ENCODE measurements at regions of chr3 and their contacts with region 1.

Region 1: GRCh38 chr3:129439817-129440617 is at the starts of genes IFT122 and MBD4:
- DNase-seq: peak; percentile 97 to 100 (median 98)
- ATAC-seq: peak; percentile 82
- H3K4me3 ChIP-seq: peak within 1 kb of the TSS; percentile 87 to 99
- H3K4me3 Mint-ChIP-seq: peak within 1 kb of the TSS; percentile 96
- H3K27ac ChIP-seq: peak within 1 kb of the TSS; percentile 92 to 93
- H3K27ac Mint-ChIP-seq: peak within 1 kb of the TSS; percentile 98
- H3K4me1 ChIP-seq: peaks cover 34% of the 10 kb centered on the region
- H3K4me1 Mint-ChIP-seq: peaks cover 70% of the 10 kb centered on the region
- H3K27me3 ChIP-seq: no peaks in the 10 kb centered on the region
- H3K27me3 Mint-ChIP-seq: no peaks in the 10 kb centered on the region
- CTCF ChIP-seq: no peak
- total RNA-seq, gene IFT122: 14.7 to 16.9 TPM
- total RNA-seq, gene MBD4: 48.5 to 51.8 TPM

Region 2: DNA sequence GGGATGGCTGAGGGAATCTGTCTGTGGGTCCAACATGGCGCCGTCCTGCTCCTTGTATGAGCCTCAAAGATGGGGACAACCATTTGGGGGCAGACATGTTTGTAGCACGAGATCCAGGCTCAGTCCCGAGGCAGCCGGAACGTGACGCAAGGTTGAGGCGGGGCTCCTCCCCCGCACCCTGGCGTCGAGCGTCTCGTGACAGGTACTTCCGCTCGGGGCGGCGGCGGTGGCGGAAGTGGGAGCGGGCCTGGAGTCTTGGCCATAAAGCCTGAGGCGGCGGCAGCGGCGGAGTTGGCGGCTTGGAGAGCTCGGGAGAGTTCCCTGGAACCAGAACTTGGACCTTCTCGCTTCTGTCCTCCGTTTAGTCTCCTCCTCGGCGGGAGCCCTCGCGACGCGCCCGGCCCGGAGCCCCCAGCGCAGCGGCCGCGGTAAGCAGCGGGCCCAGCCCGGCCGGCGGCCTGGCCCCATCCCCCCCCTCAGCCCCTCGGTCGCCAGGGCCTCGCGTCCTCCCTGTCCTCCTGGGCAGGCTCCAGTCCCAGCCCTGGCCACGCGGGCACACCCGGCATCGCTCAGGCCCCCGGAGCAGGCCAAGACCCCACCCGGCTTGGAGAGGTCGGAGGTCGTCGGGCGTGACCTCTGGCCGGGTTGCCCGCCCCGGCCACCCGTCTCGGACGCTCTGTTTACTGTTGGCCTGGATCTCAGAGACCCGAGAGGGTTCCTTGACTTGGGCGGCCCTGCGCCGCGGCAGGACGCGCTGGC is 713.9 kb before region 1 on chr3 and contains the start of gene RAB7A:
- CTCF ChIA-PET with region 1: no interaction called
- POLR2A ChIA-PET with region 1: no interaction called
- intact Hi-C with region 1: loop called in 1 of 2 experiments (anchors 10 kb)
- DNase-seq: peak; percentile 95 to 99 (median 97)
- ATAC-seq: peak; percentile 98
- H3K4me3 ChIP-seq: peak within 1 kb of the TSS; percentile 82 to 83
- H3K4me3 Mint-ChIP-seq: peak within 1 kb of the TSS; percentile 97
- H3K27ac ChIP-seq: peak within 1 kb of the TSS; percentile 92
- H3K27ac Mint-ChIP-seq: peak within 1 kb of the TSS; percentile 95
- H3K4me1 ChIP-seq: peaks cover 41% of the 10 kb centered on the region
- H3K4me1 Mint-ChIP-seq: peaks cover 53% of the 10 kb centered on the region
- H3K27me3 ChIP-seq: no peaks in the 10 kb centered on the region
- H3K27me3 Mint-ChIP-seq: no peaks in the 10 kb centered on the region
- CTCF ChIP-seq: no peak
- total RNA-seq, gene RAB7A: 130 to 134 TPM

Region 3: DNA sequence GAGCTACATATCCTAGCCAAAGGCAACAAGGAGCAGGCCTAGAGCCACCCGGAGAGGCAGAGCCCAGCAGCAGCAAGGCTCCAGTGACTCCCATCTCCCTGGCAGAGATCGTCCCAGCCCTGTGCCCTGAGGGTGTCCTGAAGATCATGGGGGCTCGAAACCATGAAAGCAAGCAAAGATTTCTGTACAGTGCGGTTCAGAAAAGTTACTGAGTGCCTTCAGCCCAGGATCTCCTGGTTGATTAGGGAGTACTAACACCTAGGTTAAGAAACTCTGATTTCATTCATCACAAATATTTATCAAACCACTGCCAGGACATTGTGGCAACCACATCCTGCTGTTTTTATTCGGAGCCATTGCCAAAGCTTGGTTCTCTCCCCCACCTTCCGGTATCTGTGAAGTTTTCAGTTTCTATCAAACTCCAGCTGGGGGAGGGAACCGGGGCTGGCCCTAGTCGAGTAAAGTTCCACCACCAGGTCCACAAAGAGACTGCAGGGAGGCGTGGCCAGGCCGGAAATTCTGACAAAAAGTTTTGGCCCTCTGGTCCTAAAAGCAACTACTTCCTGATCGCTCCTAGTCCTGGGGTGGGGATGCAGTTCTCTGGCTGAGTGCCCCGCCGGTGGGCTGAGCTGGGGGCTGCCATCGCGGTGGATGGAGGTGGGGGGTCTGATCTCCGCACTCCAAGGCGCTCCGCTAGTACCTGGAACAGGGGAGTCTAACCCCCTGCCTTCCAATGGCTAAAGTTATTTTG is 319.6 kb before region 1 on chr3:
- CTCF ChIA-PET with region 1: no interaction called
- POLR2A ChIA-PET with region 1: no interaction called
- intact Hi-C with region 1: loop called in 1 of 2 experiments (anchors 2 kb)
- DNase-seq: peak; percentile 79 to 97 (median 92)
- ATAC-seq: peak; percentile 51
- H3K4me3 ChIP-seq: peak overlapping the region; percentile 85 to 93
- H3K4me3 Mint-ChIP-seq: peak overlapping the region; percentile 94
- H3K27ac ChIP-seq: peak overlapping the region; percentile 74
- H3K27ac Mint-ChIP-seq: peak overlapping the region; percentile 99
- H3K4me1 ChIP-seq: peaks cover 33% of the 10 kb centered on the region
- H3K4me1 Mint-ChIP-seq: peaks cover 59% of the 10 kb centered on the region
- H3K27me3 ChIP-seq: no peaks in the 10 kb centered on the region
- H3K27me3 Mint-ChIP-seq: no peaks in the 10 kb centered on the region
- CTCF ChIP-seq: peak; percentile 26

Region 4: DNA sequence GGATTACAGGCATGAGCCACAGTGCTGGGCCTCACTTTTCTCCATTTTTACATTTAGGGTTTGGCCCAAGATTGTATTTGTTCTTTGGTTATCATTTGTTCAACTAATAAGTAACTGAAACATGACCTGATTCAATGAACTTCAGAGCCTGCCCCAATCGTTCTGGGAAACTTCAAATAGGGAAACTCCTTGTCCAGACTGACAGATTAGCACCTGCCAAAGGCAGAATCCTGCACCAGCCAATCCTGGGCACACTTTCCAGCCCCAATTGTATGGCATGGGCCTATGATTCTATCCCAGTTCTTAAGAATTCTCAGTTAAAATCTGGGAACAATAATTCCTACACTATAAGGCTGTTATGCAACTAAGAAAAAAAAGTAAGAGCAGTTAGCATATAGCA is 300.1 kb before region 1 on chr3:
- CTCF ChIA-PET with region 1: no interaction called
- POLR2A ChIA-PET with region 1: no interaction called
- intact Hi-C with region 1: no loop called
- DNase-seq: no peak
- ATAC-seq: no peak
- H3K4me3 ChIP-seq: no peak overlapping the region
- H3K4me3 Mint-ChIP-seq: no peak overlapping the region
- H3K27ac ChIP-seq: no peak overlapping the region
- H3K27ac Mint-ChIP-seq: no peak overlapping the region
- H3K4me1 ChIP-seq: no peaks in the 10 kb centered on the region
- H3K4me1 Mint-ChIP-seq: no peaks in the 10 kb centered on the region
- H3K27me3 ChIP-seq: no peaks in the 10 kb centered on the region
- H3K27me3 Mint-ChIP-seq: no peaks in the 10 kb centered on the region
- CTCF ChIP-seq: no peak

Region 5: GRCh38 chr3:129399145-129399894 is 40.7 kb before region 1 on chr3:
- CTCF ChIA-PET with region 1: interaction called, 4 read pairs
- POLR2A ChIA-PET with region 1: no interaction called
- intact Hi-C with region 1: loop called (anchors 1 kb)
- DNase-seq: peak; percentile 40 to 96 (median 73)
- ATAC-seq: peak; percentile 83
- H3K4me3 ChIP-seq: peak overlapping the region; percentile 63 to 72
- H3K4me3 Mint-ChIP-seq: peak overlapping the region; percentile 98
- H3K27ac ChIP-seq: peak overlapping the region; percentile 73 to 88
- H3K27ac Mint-ChIP-seq: peak overlapping the region; percentile 99
- H3K4me1 ChIP-seq: peaks cover 12% of the 10 kb centered on the region
- H3K4me1 Mint-ChIP-seq: peaks cover 42% of the 10 kb centered on the region
- H3K27me3 ChIP-seq: no peaks in the 10 kb centered on the region
- H3K27me3 Mint-ChIP-seq: no peaks in the 10 kb centered on the region
- CTCF ChIP-seq: peak; percentile 78

Region 6: DNA sequence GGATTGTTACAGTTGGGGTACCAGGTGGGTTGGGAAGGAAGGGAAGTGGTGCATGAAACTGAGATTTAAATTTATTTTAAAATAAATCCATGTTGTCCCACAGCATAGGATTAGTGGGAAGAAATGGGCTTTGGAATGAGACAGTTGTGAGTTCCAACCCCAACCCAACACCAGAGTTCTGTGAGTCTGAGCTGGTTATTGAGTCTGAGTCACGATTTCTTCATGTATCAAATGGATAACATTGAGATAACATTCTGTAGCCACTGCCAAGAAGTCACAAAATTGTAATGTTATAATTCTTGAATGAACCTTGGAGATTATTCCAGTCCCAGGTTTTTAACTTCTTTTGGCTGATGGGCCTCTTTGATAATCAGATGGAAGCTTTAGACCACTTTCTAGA is 13.7 kb after region 1 on chr3:
- CTCF ChIA-PET with region 1: no interaction called
- POLR2A ChIA-PET with region 1: no interaction called
- intact Hi-C with region 1: no loop called
- DNase-seq: no peak
- ATAC-seq: no peak
- H3K4me3 ChIP-seq: no peak overlapping the region
- H3K4me3 Mint-ChIP-seq: no peak overlapping the region
- H3K27ac ChIP-seq: no peak overlapping the region
- H3K27ac Mint-ChIP-seq: no peak overlapping the region
- H3K4me1 ChIP-seq: no peaks in the 10 kb centered on the region
- H3K4me1 Mint-ChIP-seq: no peaks in the 10 kb centered on the region
- H3K27me3 ChIP-seq: no peaks in the 10 kb centered on the region
- H3K27me3 Mint-ChIP-seq: no peaks in the 10 kb centered on the region
- CTCF ChIP-seq: no peak

Region 7: GRCh38 chr3:129576514-129577352 is 136.7 kb after region 1 on chr3:
- CTCF ChIA-PET with region 1: no interaction called
- POLR2A ChIA-PET with region 1: interaction called, 11 read pairs
- intact Hi-C with region 1: no loop called
- DNase-seq: peak; percentile 57 to 94 (median 76)
- ATAC-seq: peak; percentile 86
- H3K4me3 ChIP-seq: no peak overlapping the region
- H3K4me3 Mint-ChIP-seq: peak overlapping the region; percentile 45
- H3K27ac ChIP-seq: peak overlapping the region; percentile 12 to 89
- H3K27ac Mint-ChIP-seq: peak overlapping the region; percentile 95
- H3K4me1 ChIP-seq: peaks cover 39% of the 10 kb centered on the region
- H3K4me1 Mint-ChIP-seq: peaks cover 50% of the 10 kb centered on the region
- H3K27me3 ChIP-seq: no peaks in the 10 kb centered on the region
- H3K27me3 Mint-ChIP-seq: no peaks in the 10 kb centered on the region
- CTCF ChIP-seq: no peak

Region 8: DNA sequence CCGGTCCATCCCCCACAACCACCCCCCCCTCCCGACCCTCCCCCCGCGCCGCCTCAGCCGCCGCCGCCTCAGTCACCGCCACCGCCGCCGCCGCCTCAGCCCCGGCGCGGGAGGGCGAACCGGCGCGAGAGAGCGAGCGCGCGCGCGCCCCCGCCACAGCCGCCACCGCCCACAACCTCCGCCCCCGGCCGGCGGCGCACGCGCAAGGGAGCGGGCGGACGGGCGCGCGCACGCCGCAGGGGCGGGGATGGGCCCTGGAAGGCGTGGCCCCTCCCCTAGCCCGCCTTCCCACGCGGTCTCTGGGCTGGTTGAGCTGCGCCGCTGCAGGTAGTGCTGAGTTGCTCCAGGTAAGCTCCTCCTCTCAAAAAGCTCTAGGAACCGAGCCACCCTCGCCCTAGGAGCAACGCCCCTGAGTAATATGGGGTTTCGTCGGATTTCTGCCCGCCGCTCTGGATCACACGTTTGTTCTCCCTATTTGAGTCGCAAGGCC is 453.6 kb after region 1 on chr3 and contains the start of gene TMCC1:
- CTCF ChIA-PET with region 1: no interaction called
- POLR2A ChIA-PET with region 1: no interaction called
- intact Hi-C with region 1: loop called (anchors 1 to 2 kb)
- DNase-seq: peak; percentile 72 to 96 (median 90)
- ATAC-seq: peak; percentile 94
- H3K4me3 ChIP-seq: peak within 1 kb of the TSS; percentile 91 to 97
- H3K4me3 Mint-ChIP-seq: peak within 1 kb of the TSS; percentile 90
- H3K27ac ChIP-seq: peak within 1 kb of the TSS; percentile 91 to 93
- H3K27ac Mint-ChIP-seq: peak within 1 kb of the TSS; percentile 93
- H3K4me1 ChIP-seq: peaks cover 39% of the 10 kb centered on the region
- H3K4me1 Mint-ChIP-seq: peaks cover 43% of the 10 kb centered on the region
- H3K27me3 ChIP-seq: no peaks in the 10 kb centered on the region
- H3K27me3 Mint-ChIP-seq: no peaks in the 10 kb centered on the region
- CTCF ChIP-seq: no peak
- total RNA-seq, gene TMCC1: 30.0 to 33.1 TPM